Activated CD8-positive, alpha-beta T cell treated with anti-CD3 and anti-CD28 coated beads for 36 hours (primary cell): ENCODE measurements at regions of chr22 and their contacts with region 1.

Region 1: GRCh38 chr22:19730655-19731360 is 7.5 kb downstream of the GP1BB start:
- DNase-seq: peak; percentile 88
- ATAC-seq: peak; percentile 92
- H3K4me3 Mint-ChIP-seq: peak overlapping the region; percentile 66
- H3K27ac Mint-ChIP-seq: no peak overlapping the region
- H3K4me1 Mint-ChIP-seq: peaks cover 2% of the 10 kb centered on the region
- H3K27me3 Mint-ChIP-seq: peaks cover 1% of the 10 kb centered on the region
- CTCF ChIP-seq: peak; percentile 99

Region 2: DNA sequence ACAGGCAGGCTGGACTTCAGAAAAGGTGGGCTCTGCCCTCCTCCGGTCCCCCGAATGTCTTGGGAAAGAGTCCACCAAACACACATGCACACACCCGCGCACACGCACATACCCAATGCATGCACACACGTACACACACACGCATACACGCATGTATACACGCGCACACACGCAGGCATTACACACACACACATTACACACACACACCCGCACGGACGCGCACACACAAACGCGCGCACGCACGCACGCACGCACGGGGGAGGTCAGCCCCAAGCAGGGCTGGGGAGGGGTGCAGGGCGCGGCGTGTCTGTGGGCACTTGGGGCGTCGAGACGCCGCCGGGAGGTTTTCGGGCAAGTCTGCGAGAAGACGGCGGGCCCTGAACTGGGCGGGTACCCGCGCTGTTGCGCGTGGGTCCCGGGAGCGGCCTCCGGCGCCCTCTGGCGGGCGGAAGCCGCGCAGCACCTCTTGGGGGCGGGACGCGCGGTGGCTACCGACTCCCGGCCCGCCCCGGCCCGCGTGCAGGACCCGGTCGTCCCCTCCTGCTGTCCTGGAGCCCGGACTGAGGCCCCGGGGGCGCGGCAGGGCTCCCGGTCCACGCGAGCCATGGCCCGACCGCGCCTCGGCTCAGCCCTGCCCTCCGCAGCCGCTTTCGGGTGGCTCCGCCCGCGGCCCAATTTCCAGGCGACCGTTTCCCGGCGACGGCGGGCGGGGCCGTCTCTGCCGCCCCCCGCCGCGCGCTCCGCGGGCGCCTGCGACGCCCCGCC is 12.9 kb before region 1 on chr22:
- CTCF ChIA-PET with region 1: interaction called, 20 read pairs
- POLR2A ChIA-PET with region 1: interaction called, 5 read pairs
- intact Hi-C with region 1: no loop called
- DNase-seq: peak; percentile 79
- ATAC-seq: peak; percentile 93
- H3K4me3 Mint-ChIP-seq: peak overlapping the region; percentile 69
- H3K27ac Mint-ChIP-seq: no peak overlapping the region
- H3K4me1 Mint-ChIP-seq: peaks cover 6% of the 10 kb centered on the region
- H3K27me3 Mint-ChIP-seq: peaks cover 28% of the 10 kb centered on the region
- CTCF ChIP-seq: peak; percentile 97

Region 3: DNA sequence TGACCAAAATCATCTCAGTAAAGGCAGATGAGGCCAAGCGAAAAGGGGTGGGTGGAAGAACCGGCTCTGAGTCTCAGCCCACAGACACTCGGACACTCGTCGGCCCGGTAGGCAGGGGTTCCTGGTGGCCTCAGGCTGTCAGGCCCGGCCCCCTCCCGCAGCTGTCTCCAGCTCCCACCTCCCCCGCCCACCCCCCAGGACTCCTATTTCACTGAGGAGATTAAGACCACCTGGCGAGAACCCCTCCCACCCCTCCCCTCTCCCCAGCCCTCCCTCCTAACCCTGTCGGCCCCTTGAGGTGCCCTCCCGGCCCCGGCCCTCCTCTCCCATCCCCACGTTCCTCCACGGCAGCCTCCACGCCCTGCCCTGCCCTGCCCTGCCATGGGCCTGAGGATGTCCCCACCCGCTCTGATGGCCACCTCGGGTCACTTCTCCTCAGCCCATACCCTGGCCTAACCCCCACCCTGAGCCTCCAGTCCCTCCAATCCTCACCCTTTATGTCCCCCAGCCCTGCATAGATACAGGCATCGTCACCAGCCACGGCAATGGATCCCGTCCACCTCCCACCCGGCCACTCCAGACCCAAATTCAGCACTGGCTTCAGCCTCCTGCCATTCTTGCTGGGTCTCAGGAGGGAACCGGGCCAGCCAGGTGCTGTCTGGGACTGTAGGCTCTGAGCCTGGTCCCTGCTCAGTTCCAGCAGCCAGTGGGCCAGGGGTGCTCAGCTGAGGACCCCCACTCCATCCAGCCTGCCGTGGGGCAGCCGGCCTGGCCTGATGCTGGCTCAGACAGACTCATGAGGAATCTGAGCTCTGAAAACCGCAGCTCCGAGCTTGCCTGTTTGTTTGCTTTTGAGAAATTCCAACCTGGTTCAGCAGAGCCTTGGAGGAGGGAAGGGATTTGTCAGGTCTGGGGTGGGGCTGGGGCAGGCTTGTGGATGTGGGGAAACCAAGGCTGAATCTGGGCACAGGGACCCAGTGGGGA is 20.0 kb after region 1 on chr22:
- CTCF ChIA-PET with region 1: interaction called, 25 read pairs
- POLR2A ChIA-PET with region 1: no interaction called
- intact Hi-C with region 1: no loop called
- DNase-seq: no peak
- ATAC-seq: no peak
- H3K4me3 Mint-ChIP-seq: no peak overlapping the region
- H3K27ac Mint-ChIP-seq: no peak overlapping the region
- H3K4me1 Mint-ChIP-seq: peaks cover 2% of the 10 kb centered on the region
- H3K27me3 Mint-ChIP-seq: peaks cover 21% of the 10 kb centered on the region
- CTCF ChIP-seq: no peak

Region 4: DNA sequence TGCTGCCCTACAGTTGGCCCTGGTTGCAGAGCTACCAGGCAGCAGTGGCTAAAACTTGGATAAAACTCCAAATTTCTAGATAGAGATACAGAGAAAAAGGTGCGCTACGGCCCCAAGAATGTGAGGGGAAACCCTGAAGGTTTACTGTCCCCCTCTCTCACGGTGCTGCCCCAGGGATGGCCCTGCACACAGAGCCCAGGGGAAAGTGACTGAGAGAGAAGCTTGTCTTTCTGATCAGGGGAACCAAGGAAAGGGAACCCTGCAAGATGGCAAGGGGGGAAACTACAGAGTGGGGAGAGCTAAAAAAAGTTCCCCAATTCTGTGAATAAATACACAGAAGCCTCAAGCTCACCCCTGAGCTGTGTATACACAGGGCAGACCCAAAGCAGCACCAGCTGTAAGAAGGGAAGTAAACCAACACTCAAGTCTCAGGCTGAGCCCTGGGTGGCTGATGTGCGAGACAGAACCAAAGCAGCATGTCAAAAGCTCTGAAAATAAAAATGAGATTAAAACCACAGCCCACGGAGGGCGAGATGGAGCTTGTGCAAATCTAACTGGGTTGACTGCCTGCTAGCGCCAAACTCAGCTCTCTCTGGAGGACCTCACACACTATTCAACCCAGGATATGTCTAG is 101.8 kb after region 1 on chr22:
- CTCF ChIA-PET with region 1: interaction called, 10 read pairs
- POLR2A ChIA-PET with region 1: no interaction called
- intact Hi-C with region 1: no loop called
- DNase-seq: no peak
- ATAC-seq: no peak
- H3K4me3 Mint-ChIP-seq: no peak overlapping the region
- H3K27ac Mint-ChIP-seq: no peak overlapping the region
- H3K4me1 Mint-ChIP-seq: peaks cover 24% of the 10 kb centered on the region
- H3K27me3 Mint-ChIP-seq: no peaks in the 10 kb centered on the region
- CTCF ChIP-seq: no peak

Region 5: DNA sequence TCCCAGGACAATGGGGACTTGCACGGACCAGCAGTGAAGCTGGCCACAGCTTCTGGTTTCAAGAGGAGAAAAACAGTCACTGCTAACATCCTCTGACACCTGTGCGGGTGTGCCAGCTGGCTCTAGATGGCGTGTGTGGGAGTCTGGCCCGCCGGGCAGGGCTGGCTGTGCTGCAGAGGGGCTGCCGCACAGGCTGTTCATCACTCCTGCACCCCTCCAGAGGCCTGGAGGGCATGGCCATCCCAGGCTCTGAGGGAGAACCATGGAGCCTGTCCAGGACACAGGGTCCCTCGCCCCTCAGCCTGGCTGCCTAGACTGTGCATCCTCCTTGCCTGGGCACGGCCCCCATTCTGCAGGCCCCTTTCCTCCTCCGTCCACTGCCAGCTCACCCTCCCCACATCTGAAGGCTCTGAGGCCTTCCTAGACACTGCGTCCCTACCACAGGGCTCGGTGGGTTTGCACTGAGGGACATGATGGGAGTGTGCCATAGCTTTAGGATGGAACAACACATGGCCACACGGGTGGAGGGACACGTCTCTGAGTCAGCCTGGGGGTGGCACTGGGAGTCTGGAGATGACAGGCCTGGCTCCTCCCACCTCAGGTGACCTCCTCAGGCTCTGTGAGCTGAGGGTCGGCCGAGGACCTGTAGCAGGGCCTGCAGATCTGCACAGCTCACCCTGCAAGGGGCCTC is 166.0 kb after region 1 on chr22:
- CTCF ChIA-PET with region 1: interaction called, 21 read pairs
- POLR2A ChIA-PET with region 1: interaction called, 7 read pairs
- intact Hi-C with region 1: no loop called
- DNase-seq: peak; percentile 70
- ATAC-seq: peak; percentile 40
- H3K4me3 Mint-ChIP-seq: no peak overlapping the region
- H3K27ac Mint-ChIP-seq: peak overlapping the region; percentile 55
- H3K4me1 Mint-ChIP-seq: peaks cover 51% of the 10 kb centered on the region
- H3K27me3 Mint-ChIP-seq: no peaks in the 10 kb centered on the region
- CTCF ChIP-seq: no peak

Region 6: DNA sequence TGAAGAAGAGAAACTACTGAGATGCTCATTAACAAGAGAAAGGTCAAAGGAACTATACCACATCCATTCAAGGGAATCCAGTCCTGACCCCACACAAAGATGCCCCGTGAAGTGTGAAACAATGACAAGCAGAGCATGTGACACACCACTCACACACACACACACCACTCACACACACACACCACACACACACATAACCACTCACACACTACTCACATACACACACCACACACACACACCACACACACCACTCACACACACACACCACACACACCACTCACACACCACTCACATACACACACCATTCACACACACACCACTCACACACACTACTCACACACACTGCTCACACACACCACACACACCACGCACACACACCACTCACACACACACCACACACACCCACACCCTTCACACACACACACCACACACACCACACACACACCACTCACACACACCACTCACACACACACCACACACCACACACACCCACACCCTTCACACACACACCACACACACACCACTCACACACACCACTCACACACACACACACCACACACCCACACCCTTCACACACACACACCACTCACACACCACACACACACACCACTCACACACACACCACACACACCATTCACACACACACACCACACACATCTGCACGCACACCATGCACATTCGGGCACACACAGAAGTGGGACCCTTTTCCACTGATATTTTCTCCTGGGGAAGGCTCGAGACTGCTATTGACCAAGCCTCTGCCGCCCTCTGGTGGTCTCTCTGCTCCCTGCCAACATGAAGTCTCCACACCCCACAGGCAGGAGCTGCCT is 178.8 kb after region 1 on chr22:
- CTCF ChIA-PET with region 1: interaction called, 144 read pairs
- POLR2A ChIA-PET with region 1: interaction called, 5 read pairs
- intact Hi-C with region 1: loop called (anchors 2 kb)
- DNase-seq: peak; percentile 93
- ATAC-seq: peak; percentile 93
- H3K4me3 Mint-ChIP-seq: no peak overlapping the region
- H3K27ac Mint-ChIP-seq: peak overlapping the region; percentile 73
- H3K4me1 Mint-ChIP-seq: peaks cover 8% of the 10 kb centered on the region
- H3K27me3 Mint-ChIP-seq: no peaks in the 10 kb centered on the region
- CTCF ChIP-seq: peak; percentile 77

Region 7: GRCh38 chr22:19948057-19948760 is 217.4 kb after region 1 on chr22:
- CTCF ChIA-PET with region 1: interaction called, 21 read pairs
- POLR2A ChIA-PET with region 1: no interaction called
- intact Hi-C with region 1: no loop called
- DNase-seq: no peak
- ATAC-seq: no peak
- H3K4me3 Mint-ChIP-seq: no peak overlapping the region
- H3K27ac Mint-ChIP-seq: no peak overlapping the region
- H3K4me1 Mint-ChIP-seq: peaks cover 28% of the 10 kb centered on the region
- H3K27me3 Mint-ChIP-seq: no peaks in the 10 kb centered on the region
- CTCF ChIP-seq: peak; percentile 7

Region 8: GRCh38 chr22:20027966-20028854 is 297.4 kb after region 1 on chr22:
- CTCF ChIA-PET with region 1: no interaction called
- POLR2A ChIA-PET with region 1: no interaction called
- intact Hi-C with region 1: no loop called
- DNase-seq: peak; percentile 44
- ATAC-seq: peak; percentile 65
- H3K4me3 Mint-ChIP-seq: no peak overlapping the region
- H3K27ac Mint-ChIP-seq: no peak overlapping the region
- H3K4me1 Mint-ChIP-seq: peaks cover 16% of the 10 kb centered on the region
- H3K27me3 Mint-ChIP-seq: no peaks in the 10 kb centered on the region
- CTCF ChIP-seq: peak; percentile 56